ENCODE measurements at regions of chr3 and their contacts with region 1.

Region 1: DNA sequence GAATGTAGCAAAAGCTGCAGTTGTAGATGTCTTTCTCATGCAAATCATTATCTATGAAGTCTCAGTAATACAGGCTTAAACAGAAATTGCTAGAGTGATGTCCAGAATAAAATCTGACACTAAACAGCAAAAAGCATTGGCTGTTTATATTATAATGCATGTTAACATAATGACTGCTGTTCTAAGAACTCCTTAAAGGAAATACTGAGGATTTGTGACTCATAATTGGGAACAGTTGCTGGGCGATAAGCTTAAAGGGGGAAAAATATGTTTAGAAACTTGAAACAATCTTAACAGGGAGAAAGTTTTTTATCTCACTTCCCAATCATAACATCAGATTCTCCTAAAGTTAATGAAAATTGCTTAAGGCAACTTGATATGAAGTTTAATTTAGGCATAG is 17.5 kb downstream of the TIPARP start:
- DNase-seq: no peak
- ATAC-seq: no peak
- H3K4me3 ChIP-seq: peak overlapping the region; percentile 2
- H3K27ac ChIP-seq: no peak overlapping the region
- H3K4me1 ChIP-seq: peaks cover 39% of the 10 kb centered on the region
- H3K27me3 ChIP-seq: no peaks in the 10 kb centered on the region
- CTCF ChIP-seq: no peak

Region 2: DNA sequence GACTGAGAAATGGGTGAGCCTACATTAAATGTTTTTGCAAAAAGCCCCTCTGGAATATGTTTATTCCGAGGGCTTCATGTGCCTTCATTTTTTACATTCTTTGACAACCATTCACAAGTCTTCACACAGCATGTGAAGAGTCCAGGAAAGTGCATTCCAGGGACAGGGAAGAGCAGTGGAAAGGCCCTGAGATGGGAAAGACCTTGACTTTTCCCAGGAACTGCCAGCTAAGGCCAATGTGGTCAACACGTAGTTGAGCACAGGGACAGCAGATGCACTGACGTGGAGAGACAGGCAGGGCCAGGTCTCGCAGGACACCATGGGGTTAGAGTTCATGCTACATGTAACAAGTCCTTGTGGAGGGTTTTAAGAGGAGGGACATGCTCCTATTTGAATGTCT is 158.7 kb before region 1 on chr3:
- intact Hi-C with region 1: no loop called
- DNase-seq: no peak
- ATAC-seq: no peak
- H3K4me3 ChIP-seq: no peak overlapping the region
- H3K27ac ChIP-seq: no peak overlapping the region
- H3K4me1 ChIP-seq: no peaks in the 10 kb centered on the region
- H3K27me3 ChIP-seq: no peaks in the 10 kb centered on the region
- CTCF ChIP-seq: no peak

Region 3: DNA sequence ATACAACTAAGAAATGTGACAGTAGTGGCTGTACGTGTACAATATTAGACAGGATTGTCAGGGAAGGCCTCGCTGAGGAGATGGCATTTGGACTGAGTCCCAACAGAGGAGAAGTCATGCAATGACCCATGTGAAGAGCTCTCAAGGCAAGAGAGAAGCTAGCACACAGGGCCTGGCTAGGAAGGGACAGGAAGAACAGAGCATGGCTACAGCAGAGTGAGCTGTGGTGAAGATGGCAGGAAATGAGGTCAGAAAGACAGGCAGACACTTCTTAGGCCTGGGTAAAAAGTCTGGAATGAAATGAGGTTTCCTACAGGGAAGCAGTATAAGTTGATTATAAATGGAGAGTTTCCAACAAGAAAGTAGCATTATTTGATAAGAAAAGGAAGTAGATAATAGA is 101.0 kb after region 1 on chr3:
- intact Hi-C with region 1: no loop called
- DNase-seq: no peak
- ATAC-seq: no peak
- H3K4me3 ChIP-seq: no peak overlapping the region
- H3K27ac ChIP-seq: no peak overlapping the region
- H3K4me1 ChIP-seq: no peaks in the 10 kb centered on the region
- H3K27me3 ChIP-seq: no peaks in the 10 kb centered on the region
- CTCF ChIP-seq: no peak

Region 4: GRCh38 chr3:156847752-156848448 is 156.0 kb after region 1 on chr3:
- intact Hi-C with region 1: no loop called
- DNase-seq: no peak
- ATAC-seq: no peak
- H3K4me3 ChIP-seq: no peak overlapping the region
- H3K27ac ChIP-seq: no peak overlapping the region
- H3K4me1 ChIP-seq: no peaks in the 10 kb centered on the region
- H3K27me3 ChIP-seq: no peaks in the 10 kb centered on the region
- CTCF ChIP-seq: no peak

Region 5: DNA sequence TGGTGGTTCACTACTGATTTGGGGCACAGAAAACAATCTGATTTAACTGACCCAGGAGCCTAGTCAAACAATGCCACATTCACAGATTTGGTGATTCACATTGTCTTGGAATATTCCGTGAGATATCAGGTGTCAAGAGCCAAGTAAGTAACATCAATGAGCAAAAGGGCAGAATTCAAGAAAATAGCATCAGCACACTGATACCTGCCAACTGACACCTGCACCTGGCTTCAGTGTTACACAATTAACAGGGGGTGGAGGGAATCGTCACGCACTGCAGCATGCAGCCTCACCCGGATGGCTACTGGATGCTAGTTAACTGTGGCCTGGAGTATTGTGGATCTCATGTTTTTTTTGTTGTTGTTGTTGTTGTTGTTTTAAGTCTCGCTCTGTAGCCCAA is 450.4 kb after region 1 on chr3:
- intact Hi-C with region 1: loop called in 1 of 2 experiments (anchors 5 kb)
- DNase-seq: no peak
- ATAC-seq: no peak
- H3K4me3 ChIP-seq: no peak overlapping the region
- H3K27ac ChIP-seq: no peak overlapping the region
- H3K4me1 ChIP-seq: peaks cover 4% of the 10 kb centered on the region
- H3K27me3 ChIP-seq: no peaks in the 10 kb centered on the region
- CTCF ChIP-seq: no peak